GM12878 (cell line): ENCODE measurements at regions of chr10 and their contacts with region 1.

Region 1: DNA sequence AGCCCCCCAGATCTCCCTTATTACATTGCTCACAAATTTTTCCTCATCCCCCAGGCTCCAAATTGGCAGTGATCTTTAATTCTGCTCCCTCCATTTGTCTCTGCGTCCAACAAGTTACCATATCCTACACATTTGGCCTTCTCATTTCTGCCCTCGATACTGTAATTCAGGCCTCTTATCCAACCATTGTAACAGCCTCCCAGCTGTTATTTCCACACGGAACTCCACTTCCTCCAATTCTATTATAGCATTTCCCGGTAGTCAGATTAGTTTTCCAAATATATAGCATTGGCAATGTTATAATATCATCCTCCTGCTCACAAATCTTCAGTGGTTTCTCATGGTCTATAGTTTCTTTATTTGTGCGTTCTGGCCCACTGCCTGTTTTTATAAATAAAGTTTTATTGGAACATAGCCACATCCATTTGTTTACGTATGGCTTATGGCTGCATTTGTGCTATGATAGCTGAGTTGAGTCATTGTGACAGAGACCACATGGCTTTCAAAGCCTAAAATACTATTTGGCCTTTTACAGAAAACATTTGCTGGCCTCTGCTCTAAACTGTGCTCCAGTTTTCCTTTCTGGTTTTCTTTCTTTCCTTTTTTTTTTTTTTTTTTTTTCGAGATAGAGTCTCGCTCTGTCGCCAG is 126.5 kb upstream of the ZNF438 start:
- DNase-seq: no peak
- ATAC-seq: no peak
- H3K4me3 ChIP-seq: no peak overlapping the region
- H3K27ac ChIP-seq: no peak overlapping the region
- H3K4me1 ChIP-seq: no peaks in the 10 kb centered on the region
- H3K27me3 ChIP-seq: no peaks in the 10 kb centered on the region
- CTCF ChIP-seq: no peak
- EP300 ChIP-seq: no peak
- POLR2A ChIP-seq: no peak
- RAD21 ChIP-seq: no peak

Region 2: GRCh38 chr10:30742471-30742870 is 415.7 kb before region 1 on chr10:
- CTCF ChIA-PET with region 1: no interaction called
- POLR2A ChIA-PET with region 1: interaction called, 10 read pairs
- RAD21 ChIA-PET with region 1: no interaction called
- SMC1A ChIA-PET with region 1: no interaction called
- in situ Hi-C with region 1: no loop called
- intact Hi-C with region 1: no loop called
- DNase-seq: peak; percentile 86
- ATAC-seq: peak; percentile 82
- H3K4me3 ChIP-seq: no peak overlapping the region
- H3K27ac ChIP-seq: peak overlapping the region; percentile 54
- H3K4me1 ChIP-seq: peaks cover 39% of the 10 kb centered on the region
- H3K27me3 ChIP-seq: no peaks in the 10 kb centered on the region
- CTCF ChIP-seq: no peak
- EP300 ChIP-seq: peak; percentile 47 to 51; a peak in 2 of 4 replicates
- POLR2A ChIP-seq: no peak
- RAD21 ChIP-seq: no peak